ENCODE measurements at regions of chr14 and their contacts with region 1.

Region 1: GRCh38 chr14:105375635-105376057 is 22.7 kb upstream of the TEX22 start:
- H3K4me3 Mint-ChIP-seq: peak overlapping the region; percentile 9
- H3K27ac Mint-ChIP-seq: peak overlapping the region; percentile 71
- H3K4me1 Mint-ChIP-seq: peaks cover 25% of the 10 kb centered on the region
- H3K27me3 Mint-ChIP-seq: no peaks in the 10 kb centered on the region

Region 2: DNA sequence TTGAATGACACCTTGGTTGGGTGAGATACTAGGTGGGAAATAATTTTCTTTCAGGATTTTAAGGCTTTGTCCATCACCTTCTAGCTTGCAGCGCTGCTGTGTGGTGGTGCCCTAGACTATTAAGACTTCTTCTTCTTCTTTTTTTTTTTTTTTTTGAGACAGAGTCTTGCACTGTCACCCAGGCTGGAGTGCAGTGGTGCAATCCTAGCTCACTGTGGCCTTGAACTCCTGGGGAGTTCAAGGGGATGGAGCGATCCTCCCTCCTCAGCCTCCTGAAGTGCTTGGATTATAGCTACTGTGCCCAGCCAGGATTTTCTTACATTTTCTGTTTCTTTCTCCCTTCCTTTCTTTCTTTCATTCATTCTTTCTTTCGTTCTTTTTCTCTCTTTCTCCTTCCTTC is 33.7 kb after region 1 on chr14:
- intact Hi-C with region 1: loop called (anchors 5 kb)
- H3K4me3 Mint-ChIP-seq: no peak overlapping the region
- H3K27ac Mint-ChIP-seq: peak overlapping the region; percentile 80
- H3K4me1 Mint-ChIP-seq: peaks cover 66% of the 10 kb centered on the region
- H3K27me3 Mint-ChIP-seq: peaks cover 38% of the 10 kb centered on the region

Region 3: GRCh38 chr14:105448706-105449111 is 73.1 kb after region 1 on chr14:
- intact Hi-C with region 1: loop called (anchors 1 kb)
- H3K4me3 Mint-ChIP-seq: no peak overlapping the region
- H3K27ac Mint-ChIP-seq: no peak overlapping the region
- H3K4me1 Mint-ChIP-seq: no peaks in the 10 kb centered on the region
- H3K27me3 Mint-ChIP-seq: no peaks in the 10 kb centered on the region